CD4-positive, alpha-beta T cell (primary cell): ENCODE measurements at regions of chr13 and their contacts with region 1.

Region 1: DNA sequence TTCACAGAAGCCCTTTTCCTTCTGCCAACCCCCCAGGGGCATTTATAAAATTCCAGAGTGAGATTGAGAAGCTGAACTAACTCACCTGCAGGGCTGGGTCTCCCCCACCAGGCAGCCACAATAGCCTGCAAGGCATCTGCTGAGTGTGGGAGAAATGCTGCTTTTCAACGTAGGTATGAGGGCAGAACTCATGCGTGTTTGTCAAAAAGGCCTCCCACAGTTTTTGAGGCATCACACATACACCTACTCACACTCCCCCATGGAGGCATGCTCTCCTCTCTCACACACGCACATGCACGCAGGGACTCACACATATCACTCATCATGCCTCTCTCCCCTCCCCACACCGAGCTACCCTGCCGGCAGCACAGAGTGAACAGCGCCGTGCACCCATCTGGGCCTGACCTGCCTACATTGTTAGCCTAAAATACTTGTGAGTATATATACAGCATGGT is 390.5 kb downstream of the FGF9 start:
- DNase-seq: peak; percentile 25 to 80 (median 55)
- ATAC-seq: peak; percentile 81
- H3K4me3 ChIP-seq: no peak overlapping the region
- H3K4me3 Mint-ChIP-seq: peak overlapping the region; percentile 61
- H3K27ac ChIP-seq: peak overlapping the region; percentile 83 to 93
- H3K27ac Mint-ChIP-seq: peak overlapping the region; percentile 95
- H3K4me1 ChIP-seq: peaks cover 74% of the 10 kb centered on the region
- H3K4me1 Mint-ChIP-seq: peaks cover 85% of the 10 kb centered on the region
- H3K27me3 ChIP-seq: no peaks in the 10 kb centered on the region
- H3K27me3 Mint-ChIP-seq: no peaks in the 10 kb centered on the region
- CTCF ChIP-seq: peak; percentile 38

Region 2: DNA sequence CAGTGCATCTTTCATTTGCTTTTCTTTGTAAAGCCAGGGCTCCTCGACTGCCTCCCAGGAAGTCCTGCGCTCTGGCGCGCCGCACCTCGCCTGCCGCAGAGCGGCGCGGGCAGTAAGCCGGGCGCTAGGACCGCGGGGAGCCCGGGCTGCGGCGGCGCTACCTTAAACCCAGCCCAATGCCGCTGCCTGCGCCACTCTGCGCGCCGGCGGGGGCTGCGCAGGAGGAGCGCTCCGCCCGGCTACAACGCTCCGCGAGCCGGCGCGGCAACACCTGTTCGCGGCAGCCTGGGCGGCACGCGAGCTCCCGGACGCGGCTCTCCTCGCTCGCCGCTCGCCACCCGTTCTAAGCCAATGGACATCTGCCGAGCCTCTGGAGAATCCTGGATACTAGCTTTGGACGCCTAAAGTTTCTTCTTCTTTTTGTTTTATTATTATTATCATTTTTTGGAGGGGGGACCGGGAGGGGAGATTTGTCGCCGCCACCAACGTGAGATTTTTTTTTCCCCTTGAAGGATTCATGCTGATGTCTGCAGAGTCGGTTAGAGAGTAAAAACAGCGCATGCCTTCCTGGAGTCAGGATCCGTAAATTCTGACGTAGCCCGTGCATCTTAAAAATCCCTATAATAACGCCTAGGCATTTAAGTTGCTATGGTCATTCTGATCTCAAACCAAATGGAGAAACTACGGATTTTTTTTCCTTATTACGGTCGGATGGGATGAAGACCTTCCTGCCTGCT is 390.3 kb before region 1 on chr13 and contains the start of gene FGF9:
- CTCF ChIA-PET with region 1: no interaction called
- POLR2A ChIA-PET with region 1: interaction called, 15 read pairs
- intact Hi-C with region 1: loop called (anchors 5 kb)
- DNase-seq: peak; percentile 59 to 93 (median 74)
- ATAC-seq: peak; percentile 72
- H3K4me3 ChIP-seq: peak within 1 kb of the TSS; percentile 81
- H3K4me3 Mint-ChIP-seq: peak within 1 kb of the TSS; percentile 92
- H3K27ac ChIP-seq: peak within 1 kb of the TSS in 1 of 2 donors; percentile 2
- H3K27ac Mint-ChIP-seq: peak within 1 kb of the TSS; percentile 77
- H3K4me1 ChIP-seq: peaks cover 62% of the 10 kb centered on the region
- H3K4me1 Mint-ChIP-seq: peaks cover 45% of the 10 kb centered on the region
- H3K27me3 ChIP-seq: peaks cover 18 to 21% of the 10 kb centered on the region in 2 experiments
- H3K27me3 Mint-ChIP-seq: peaks cover 43% of the 10 kb centered on the region
- CTCF ChIP-seq: no peak
- total RNA-seq, gene FGF9: 2.2 to 3.4 TPM

Region 3: DNA sequence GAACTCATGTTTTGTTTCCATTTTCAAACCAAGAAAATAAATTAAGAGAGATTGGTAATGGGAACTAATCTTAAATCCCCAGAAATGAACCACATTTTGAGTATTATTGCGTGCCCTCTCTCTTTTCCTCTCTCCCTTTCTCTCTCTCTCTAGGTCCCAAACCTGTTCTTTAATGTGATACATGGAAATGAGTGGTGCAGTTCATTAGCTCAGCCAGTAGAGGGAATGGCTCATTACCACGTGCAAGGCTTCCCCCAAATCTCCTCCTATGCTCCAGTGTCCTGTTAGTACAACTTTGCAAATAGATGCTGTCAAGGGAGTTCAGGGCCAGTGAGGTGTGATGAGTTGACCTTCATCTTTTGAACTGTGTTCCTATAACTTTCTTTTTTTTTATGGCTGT is 212.1 kb before region 1 on chr13:
- CTCF ChIA-PET with region 1: no interaction called
- POLR2A ChIA-PET with region 1: no interaction called
- intact Hi-C with region 1: loop called (anchors 5 kb)
- DNase-seq: peak in 5 of 14 experiments; percentile 6 to 61 (median 43)
- ATAC-seq: peak; percentile 74
- H3K4me3 ChIP-seq: no peak overlapping the region
- H3K4me3 Mint-ChIP-seq: no peak overlapping the region
- H3K27ac ChIP-seq: no peak overlapping the region
- H3K27ac Mint-ChIP-seq: no peak overlapping the region
- H3K4me1 ChIP-seq: no peaks in the 10 kb centered on the region
- H3K4me1 Mint-ChIP-seq: no peaks in the 10 kb centered on the region
- H3K27me3 ChIP-seq: peaks cover 0 to 2% of the 10 kb centered on the region in 2 experiments
- H3K27me3 Mint-ChIP-seq: no peaks in the 10 kb centered on the region
- CTCF ChIP-seq: peak; percentile 74

Region 4: GRCh38 chr13:22073718-22074117 is 12.3 kb after region 1 on chr13:
- CTCF ChIA-PET with region 1: interaction called, 3 read pairs
- POLR2A ChIA-PET with region 1: interaction called, 13 read pairs
- intact Hi-C with region 1: no loop called
- DNase-seq: peak in 1 of 14 experiments; percentile 48
- ATAC-seq: no peak
- H3K4me3 ChIP-seq: no peak overlapping the region
- H3K4me3 Mint-ChIP-seq: no peak overlapping the region
- H3K27ac ChIP-seq: no peak overlapping the region
- H3K27ac Mint-ChIP-seq: no peak overlapping the region
- H3K4me1 ChIP-seq: peaks cover 10% of the 10 kb centered on the region
- H3K4me1 Mint-ChIP-seq: peaks cover 28% of the 10 kb centered on the region
- H3K27me3 ChIP-seq: no peaks in the 10 kb centered on the region
- H3K27me3 Mint-ChIP-seq: no peaks in the 10 kb centered on the region
- CTCF ChIP-seq: no peak

Region 5: GRCh38 chr13:22114630-22115311 is 53.4 kb after region 1 on chr13:
- CTCF ChIA-PET with region 1: no interaction called
- POLR2A ChIA-PET with region 1: interaction called, 3 read pairs
- intact Hi-C with region 1: loop called in 1 of 2 experiments (anchors 1 kb)
- DNase-seq: peak in 5 of 14 experiments; percentile 7 to 89 (median 84)
- ATAC-seq: peak; percentile 92
- H3K4me3 ChIP-seq: no peak overlapping the region
- H3K4me3 Mint-ChIP-seq: peak overlapping the region; percentile 52
- H3K27ac ChIP-seq: peak overlapping the region in 1 of 2 donors; percentile 47
- H3K27ac Mint-ChIP-seq: peak overlapping the region; percentile 85
- H3K4me1 ChIP-seq: peaks cover 12% of the 10 kb centered on the region
- H3K4me1 Mint-ChIP-seq: peaks cover 38% of the 10 kb centered on the region
- H3K27me3 ChIP-seq: no peaks in the 10 kb centered on the region
- H3K27me3 Mint-ChIP-seq: no peaks in the 10 kb centered on the region
- CTCF ChIP-seq: no peak

Region 6: GRCh38 chr13:22161871-22162270 is 100.5 kb after region 1 on chr13:
- CTCF ChIA-PET with region 1: no interaction called
- POLR2A ChIA-PET with region 1: interaction called, 3 read pairs
- intact Hi-C with region 1: loop called in 1 of 2 experiments (anchors 5 kb)
- DNase-seq: peak in 2 of 14 experiments; percentile 7 to 41
- ATAC-seq: peak; percentile 43
- H3K4me3 ChIP-seq: peak overlapping the region; percentile 15
- H3K4me3 Mint-ChIP-seq: peak overlapping the region; percentile 74
- H3K27ac ChIP-seq: no peak overlapping the region
- H3K27ac Mint-ChIP-seq: peak overlapping the region; percentile 41
- H3K4me1 ChIP-seq: peaks cover 4% of the 10 kb centered on the region
- H3K4me1 Mint-ChIP-seq: peaks cover 37% of the 10 kb centered on the region
- H3K27me3 ChIP-seq: no peaks in the 10 kb centered on the region
- H3K27me3 Mint-ChIP-seq: no peaks in the 10 kb centered on the region
- CTCF ChIP-seq: no peak

Region 7: GRCh38 chr13:22278336-22278929 is 217.1 kb after region 1 on chr13:
- CTCF ChIA-PET with region 1: no interaction called
- POLR2A ChIA-PET with region 1: interaction called, 3 read pairs
- intact Hi-C with region 1: loop called (anchors 2 to 5 kb)
- DNase-seq: peak; percentile 51 to 77 (median 63)
- ATAC-seq: peak; percentile 59
- H3K4me3 ChIP-seq: no peak overlapping the region
- H3K4me3 Mint-ChIP-seq: no peak overlapping the region
- H3K27ac ChIP-seq: no peak overlapping the region
- H3K27ac Mint-ChIP-seq: no peak overlapping the region
- H3K4me1 ChIP-seq: no peaks in the 10 kb centered on the region
- H3K4me1 Mint-ChIP-seq: peaks cover 16% of the 10 kb centered on the region
- H3K27me3 ChIP-seq: no peaks in the 10 kb centered on the region
- H3K27me3 Mint-ChIP-seq: no peaks in the 10 kb centered on the region
- CTCF ChIP-seq: peak; percentile 71